ENCODE measurements at regions of chr3 and their contacts with region 1.

Region 1: GRCh38 chr3:150232992-150233451 is 175.1 kb upstream of the TSC22D2 start:
- DNase-seq: no peak
- H3K4me3 ChIP-seq: no peak overlapping the region
- H3K27ac ChIP-seq: no peak overlapping the region
- H3K4me1 ChIP-seq: peaks cover 39% of the 10 kb centered on the region
- H3K27me3 ChIP-seq: no peaks in the 10 kb centered on the region
- CTCF ChIP-seq: no peak

Region 2: DNA sequence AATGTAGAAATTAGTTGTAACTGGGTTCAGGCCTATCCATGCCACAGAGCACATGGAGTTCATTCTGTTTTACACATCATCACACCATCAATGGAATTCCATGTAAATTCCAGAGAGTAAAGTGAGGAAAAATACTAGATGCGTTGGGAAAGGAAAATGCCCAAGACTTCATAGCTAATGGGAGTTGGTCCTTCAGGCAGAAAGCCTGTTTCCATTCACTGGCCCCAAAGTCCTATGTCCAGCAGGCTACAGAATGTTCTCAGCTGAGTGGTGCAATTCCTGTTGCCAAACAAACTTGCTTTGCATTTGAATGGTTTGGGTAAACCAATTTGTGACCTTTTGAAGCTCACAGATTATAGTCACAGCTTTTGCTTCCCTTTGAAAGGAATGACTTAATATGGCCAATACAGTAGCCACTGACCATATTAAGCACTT is 97.7 kb before region 1 on chr3:
- CTCF ChIA-PET with region 1: no interaction called
- dilution Hi-C with region 1: no loop called
- in situ Hi-C with region 1: no loop called
- intact Hi-C with region 1: no loop called
- DNase-seq: no peak
- H3K4me3 ChIP-seq: no peak overlapping the region
- H3K27ac ChIP-seq: no peak overlapping the region
- H3K4me1 ChIP-seq: no peaks in the 10 kb centered on the region
- H3K27me3 ChIP-seq: no peaks in the 10 kb centered on the region
- CTCF ChIP-seq: no peak

Region 3: GRCh38 chr3:150170852-150171520 is 62.0 kb before region 1 on chr3:
- CTCF ChIA-PET with region 1: no interaction called
- dilution Hi-C with region 1: no loop called
- in situ Hi-C with region 1: no loop called
- intact Hi-C with region 1: no loop called
- DNase-seq: no peak
- H3K4me3 ChIP-seq: no peak overlapping the region
- H3K27ac ChIP-seq: no peak overlapping the region
- H3K4me1 ChIP-seq: no peaks in the 10 kb centered on the region
- H3K27me3 ChIP-seq: no peaks in the 10 kb centered on the region
- CTCF ChIP-seq: no peak

Region 4: DNA sequence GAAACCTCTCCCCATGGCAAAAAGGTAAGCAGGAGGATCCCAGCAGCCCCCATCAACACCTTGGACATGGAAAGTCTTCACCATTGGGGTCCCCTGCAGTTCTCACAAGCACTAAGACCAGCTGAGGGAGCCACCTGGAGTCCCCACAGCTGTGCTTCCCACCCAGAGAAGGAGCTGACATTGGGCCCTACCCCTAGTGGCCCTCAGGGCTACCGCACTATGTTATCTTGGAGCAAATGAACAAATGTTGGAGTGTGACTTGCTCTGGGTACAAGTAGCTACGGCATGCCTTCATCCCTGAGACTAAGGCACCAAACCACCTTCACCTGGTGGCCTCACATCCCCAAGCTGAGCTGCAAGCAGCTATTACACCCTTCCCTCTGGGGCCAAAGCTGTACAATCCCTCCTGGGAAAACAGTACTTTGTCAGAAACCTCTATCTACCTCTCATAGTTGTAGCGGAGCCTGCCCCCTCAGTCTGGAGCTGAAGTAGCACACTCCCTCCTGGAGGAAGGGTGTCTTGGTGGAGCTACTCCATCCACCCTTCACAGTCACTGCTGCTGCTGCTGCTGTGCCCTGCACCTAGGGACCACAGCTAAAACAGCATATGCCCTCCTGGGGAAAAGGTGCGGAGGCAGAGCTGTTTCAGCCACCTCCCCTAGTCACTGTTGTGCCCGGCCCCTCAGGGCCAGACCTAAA is 270.5 kb after region 1 on chr3:
- CTCF ChIA-PET with region 1: no interaction called
- dilution Hi-C with region 1: no loop called
- in situ Hi-C with region 1: loop called (anchors 5 kb)
- intact Hi-C with region 1: no loop called
- DNase-seq: no peak
- H3K4me3 ChIP-seq: no peak overlapping the region
- H3K27ac ChIP-seq: no peak overlapping the region
- H3K4me1 ChIP-seq: no peaks in the 10 kb centered on the region
- H3K27me3 ChIP-seq: no peaks in the 10 kb centered on the region
- CTCF ChIP-seq: no peak

Measured in mammary epithelial cell (primary cell).